ENCODE measurements at regions of chrX and their contacts with region 1.

Region 1: DNA sequence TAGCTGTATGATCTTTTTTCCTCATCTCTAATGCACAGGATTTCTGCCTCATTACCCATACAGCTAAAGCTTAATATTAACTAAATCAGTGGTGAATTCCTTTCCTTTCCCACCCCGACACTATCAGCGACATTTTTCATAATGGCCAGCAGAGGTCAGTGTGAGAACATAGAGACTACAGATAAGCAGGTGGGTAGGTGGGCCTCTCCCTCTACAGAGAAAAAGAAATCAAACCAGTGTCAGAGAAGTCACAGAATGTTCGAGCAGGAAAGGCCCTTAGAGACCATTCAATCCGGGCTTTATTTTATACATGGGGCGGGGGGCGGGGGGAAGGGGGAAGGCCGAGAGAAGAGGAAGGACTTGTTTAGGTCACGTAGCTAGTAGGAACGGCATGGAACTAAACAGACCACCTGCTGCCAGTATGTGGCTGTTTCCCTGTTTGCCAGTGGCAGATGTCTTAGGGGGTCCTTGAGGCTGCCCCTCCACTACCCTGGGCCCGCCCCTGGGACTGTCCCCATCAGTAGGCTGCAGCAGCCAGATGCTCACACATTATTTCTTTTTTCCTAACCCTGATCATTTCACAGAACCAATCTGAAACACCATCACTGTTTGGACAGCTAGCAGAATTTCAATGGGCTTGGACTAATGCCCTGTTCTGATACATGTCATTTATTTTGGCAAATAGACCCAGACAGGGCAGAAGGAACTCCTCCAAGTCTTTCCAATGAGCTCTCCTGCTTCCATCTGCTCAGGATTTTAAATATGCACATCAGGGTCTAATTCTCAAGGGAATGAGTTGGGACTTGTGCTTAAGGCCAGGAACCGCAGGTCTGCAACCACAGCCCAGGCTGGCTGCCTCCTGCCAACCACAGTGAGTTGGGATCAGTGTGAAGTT is 133.4 kb downstream of the ATG4A start:
- DNase-seq: peak; percentile 57
- H3K4me3 ChIP-seq: no peak overlapping the region
- H3K27ac ChIP-seq: peak overlapping the region; percentile 16
- H3K4me1 ChIP-seq: peaks cover 8% of the 10 kb centered on the region
- H3K27me3 ChIP-seq: no peaks in the 10 kb centered on the region
- CTCF ChIP-seq: peak; percentile 67 to 78

Region 2: GRCh38 chrX:108122748-108123147 is 102.2 kb before region 1 on chrX:
- CTCF ChIA-PET with region 1: no interaction called
- dilution Hi-C with region 1: no loop called
- in situ Hi-C with region 1: no loop called
- intact Hi-C with region 1: no loop called
- DNase-seq: peak; percentile 74
- H3K4me3 ChIP-seq: no peak overlapping the region
- H3K27ac ChIP-seq: peak overlapping the region; percentile 49
- H3K4me1 ChIP-seq: peaks cover 22% of the 10 kb centered on the region
- H3K27me3 ChIP-seq: no peaks in the 10 kb centered on the region
- CTCF ChIP-seq: no peak

Region 3: GRCh38 chrX:108138814-108139702 is 85.9 kb before region 1 on chrX:
- CTCF ChIA-PET with region 1: no interaction called
- dilution Hi-C with region 1: loop called (anchors 5 kb)
- in situ Hi-C with region 1: no loop called
- intact Hi-C with region 1: no loop called
- DNase-seq: no peak
- H3K4me3 ChIP-seq: no peak overlapping the region
- H3K27ac ChIP-seq: no peak overlapping the region
- H3K4me1 ChIP-seq: no peaks in the 10 kb centered on the region
- H3K27me3 ChIP-seq: no peaks in the 10 kb centered on the region
- CTCF ChIP-seq: peak; percentile 63 to 66

Region 4: GRCh38 chrX:108304210-108304609 is 79.2 kb after region 1 on chrX:
- CTCF ChIA-PET with region 1: no interaction called
- dilution Hi-C with region 1: no loop called
- in situ Hi-C with region 1: no loop called
- intact Hi-C with region 1: loop called (anchors 2 kb)
- DNase-seq: no peak
- H3K4me3 ChIP-seq: no peak overlapping the region
- H3K27ac ChIP-seq: no peak overlapping the region
- H3K4me1 ChIP-seq: peaks cover 19% of the 10 kb centered on the region
- H3K27me3 ChIP-seq: no peaks in the 10 kb centered on the region
- CTCF ChIP-seq: peak; percentile 54 to 57

Region 5: DNA sequence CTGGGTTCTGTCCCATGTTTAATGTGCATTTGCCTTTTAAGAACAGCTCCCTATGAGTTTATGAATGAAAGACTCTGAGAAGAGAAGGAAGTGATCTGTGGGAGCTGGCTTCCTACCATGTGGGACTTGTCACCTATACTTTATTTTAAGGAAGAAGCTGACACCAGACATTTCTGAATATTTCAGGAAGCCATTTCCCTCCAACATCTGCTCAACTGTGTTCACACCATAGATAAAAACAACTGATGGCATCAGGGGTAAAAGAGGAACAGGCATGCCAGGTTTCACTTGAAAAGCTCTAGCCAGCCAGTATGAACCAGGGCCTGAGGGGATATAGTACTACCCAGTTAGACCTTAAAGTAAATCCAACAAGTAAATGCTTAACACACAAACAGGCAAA is 97.3 kb after region 1 on chrX:
- CTCF ChIA-PET with region 1: no interaction called
- dilution Hi-C with region 1: no loop called
- in situ Hi-C with region 1: no loop called
- intact Hi-C with region 1: no loop called
- DNase-seq: no peak
- H3K4me3 ChIP-seq: no peak overlapping the region
- H3K27ac ChIP-seq: no peak overlapping the region
- H3K4me1 ChIP-seq: peaks cover under 1% of the 10 kb centered on the region
- H3K27me3 ChIP-seq: no peaks in the 10 kb centered on the region
- CTCF ChIP-seq: no peak

Region 6: GRCh38 chrX:108439434-108439883 is 214.5 kb after region 1 on chrX and contains the start of gene COL4A5:
- CTCF ChIA-PET with region 1: interaction called, 4 read pairs
- dilution Hi-C with region 1: no loop called
- in situ Hi-C with region 1: no loop called
- intact Hi-C with region 1: loop called (anchors 2 kb)
- DNase-seq: peak; percentile 93
- H3K4me3 ChIP-seq: peak within 1 kb of the TSS; percentile 61 to 71 (median 67)
- H3K27ac ChIP-seq: peak within 1 kb of the TSS; percentile 78
- H3K4me1 ChIP-seq: no peaks in the 10 kb centered on the region
- H3K27me3 ChIP-seq: no peaks in the 10 kb centered on the region
- CTCF ChIP-seq: no peak
- total RNA-seq, gene COL4A5: 123 to 132 TPM

Region 7: GRCh38 chrX:108537005-108537404 is 312.0 kb after region 1 on chrX:
- CTCF ChIA-PET with region 1: no interaction called
- dilution Hi-C with region 1: no loop called
- in situ Hi-C with region 1: no loop called
- intact Hi-C with region 1: loop called (anchors 1 kb)
- DNase-seq: peak; percentile 29
- H3K4me3 ChIP-seq: no peak overlapping the region
- H3K27ac ChIP-seq: no peak overlapping the region
- H3K4me1 ChIP-seq: no peaks in the 10 kb centered on the region
- H3K27me3 ChIP-seq: no peaks in the 10 kb centered on the region
- CTCF ChIP-seq: peak; percentile 75 to 77

Measured in mammary epithelial cell (primary cell).